CD4-positive, alpha-beta T cell (primary cell): ENCODE measurements at regions of chr4 and their contacts with region 1.

Region 1: GRCh38 chr4:185640811-185641675 is 105.7 kb upstream of the PDLIM3 start:
- DNase-seq: peak in 3 of 14 experiments; percentile 25 to 33 (median 27)
- ATAC-seq: no peak
- H3K4me3 ChIP-seq: no peak overlapping the region
- H3K4me3 Mint-ChIP-seq: no peak overlapping the region
- H3K27ac ChIP-seq: no peak overlapping the region
- H3K27ac Mint-ChIP-seq: no peak overlapping the region
- H3K4me1 ChIP-seq: peaks cover 4% of the 10 kb centered on the region
- H3K4me1 Mint-ChIP-seq: no peaks in the 10 kb centered on the region
- H3K27me3 ChIP-seq: peaks cover 16 to 36% of the 10 kb centered on the region in 2 experiments
- H3K27me3 Mint-ChIP-seq: peaks cover 65% of the 10 kb centered on the region
- CTCF ChIP-seq: peak; percentile 20

Region 2: GRCh38 chr4:186037692-186038658 is 396.9 kb after region 1 on chr4:
- CTCF ChIA-PET with region 1: no interaction called
- POLR2A ChIA-PET with region 1: no interaction called
- intact Hi-C with region 1: loop called in 1 of 2 experiments (anchors 5 kb)
- DNase-seq: peak in 4 of 14 experiments; percentile 21 to 69 (median 61)
- ATAC-seq: peak; percentile 44
- H3K4me3 ChIP-seq: no peak overlapping the region
- H3K4me3 Mint-ChIP-seq: no peak overlapping the region
- H3K27ac ChIP-seq: no peak overlapping the region
- H3K27ac Mint-ChIP-seq: no peak overlapping the region
- H3K4me1 ChIP-seq: no peaks in the 10 kb centered on the region
- H3K4me1 Mint-ChIP-seq: no peaks in the 10 kb centered on the region
- H3K27me3 ChIP-seq: peaks cover 8 to 15% of the 10 kb centered on the region in 2 experiments
- H3K27me3 Mint-ChIP-seq: peaks cover 32% of the 10 kb centered on the region
- CTCF ChIP-seq: peak; percentile 64

Region 3: DNA sequence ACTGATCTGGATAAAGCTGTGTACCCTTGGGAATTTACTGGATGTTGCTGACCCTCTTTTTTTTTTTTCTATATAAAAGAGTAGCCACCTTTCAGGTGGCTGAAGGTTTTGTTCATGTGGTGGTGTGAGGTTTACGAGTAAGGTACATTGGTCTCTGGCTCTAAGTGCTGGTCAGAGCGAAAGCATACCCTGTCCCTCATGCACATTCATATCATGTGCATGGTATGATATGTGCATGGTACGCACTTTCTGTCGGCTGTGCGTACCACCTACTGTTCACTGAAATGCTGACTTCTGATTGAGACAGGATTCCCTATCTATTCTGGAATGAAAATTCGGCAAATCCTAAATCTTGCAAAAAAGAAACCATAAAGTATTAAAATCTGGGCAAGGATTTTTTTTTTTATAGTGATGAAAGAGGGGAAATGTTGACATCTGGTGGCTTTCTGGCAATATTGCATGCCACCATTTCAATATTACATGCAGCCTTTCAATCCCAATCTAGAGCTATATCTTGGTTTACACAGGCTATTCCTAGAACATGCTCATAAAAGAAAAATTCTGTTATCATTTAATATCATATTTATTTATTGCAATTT is 496.3 kb after region 1 on chr4:
- CTCF ChIA-PET with region 1: no interaction called
- POLR2A ChIA-PET with region 1: no interaction called
- intact Hi-C with region 1: loop called (anchors 5 kb)
- DNase-seq: peak in 2 of 14 experiments; percentile 12 to 13
- ATAC-seq: no peak
- H3K4me3 ChIP-seq: no peak overlapping the region
- H3K4me3 Mint-ChIP-seq: no peak overlapping the region
- H3K27ac ChIP-seq: no peak overlapping the region
- H3K27ac Mint-ChIP-seq: no peak overlapping the region
- H3K4me1 ChIP-seq: no peaks in the 10 kb centered on the region
- H3K4me1 Mint-ChIP-seq: no peaks in the 10 kb centered on the region
- H3K27me3 ChIP-seq: no peaks in the 10 kb centered on the region
- H3K27me3 Mint-ChIP-seq: peaks cover 8% of the 10 kb centered on the region
- CTCF ChIP-seq: peak; percentile 65

Region 4: DNA sequence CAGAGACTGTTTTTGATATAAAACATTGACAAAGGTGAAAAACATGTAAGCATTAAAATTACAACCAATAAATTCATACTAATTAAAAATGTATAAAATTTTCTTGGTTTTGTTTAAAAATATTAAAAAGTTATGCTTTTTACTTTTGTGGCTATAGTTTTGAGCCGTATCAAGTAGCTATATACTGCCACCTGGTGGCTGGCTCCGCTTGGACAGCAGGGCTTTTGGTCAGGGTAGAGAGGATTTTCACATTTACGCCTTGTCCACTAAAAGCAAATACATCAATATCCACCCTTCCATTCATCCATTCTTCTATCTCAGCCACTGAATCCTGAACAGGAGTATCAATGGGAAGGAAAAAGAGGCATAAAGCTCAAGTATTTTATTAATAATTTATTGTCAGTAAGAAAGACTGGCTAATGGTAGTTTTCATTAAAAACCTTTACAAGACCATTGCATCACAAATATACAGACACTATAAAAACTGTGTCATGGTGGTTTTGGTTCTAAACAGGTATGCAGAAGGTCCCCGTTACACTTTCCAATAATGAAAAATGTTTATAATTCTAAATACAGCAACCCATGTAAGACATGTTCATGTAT is 946.5 kb after region 1 on chr4:
- CTCF ChIA-PET with region 1: no interaction called
- POLR2A ChIA-PET with region 1: no interaction called
- intact Hi-C with region 1: loop called in 1 of 2 experiments (anchors 10 kb)
- DNase-seq: peak; percentile 15 to 65 (median 46)
- ATAC-seq: no peak
- H3K4me3 ChIP-seq: no peak overlapping the region
- H3K4me3 Mint-ChIP-seq: no peak overlapping the region
- H3K27ac ChIP-seq: no peak overlapping the region
- H3K27ac Mint-ChIP-seq: no peak overlapping the region
- H3K4me1 ChIP-seq: no peaks in the 10 kb centered on the region
- H3K4me1 Mint-ChIP-seq: no peaks in the 10 kb centered on the region
- H3K27me3 ChIP-seq: no peaks in the 10 kb centered on the region
- H3K27me3 Mint-ChIP-seq: peaks cover 4% of the 10 kb centered on the region
- CTCF ChIP-seq: peak; percentile 89